ENCODE measurements at regions of chr3 and their contacts with region 1.

Region 1: DNA sequence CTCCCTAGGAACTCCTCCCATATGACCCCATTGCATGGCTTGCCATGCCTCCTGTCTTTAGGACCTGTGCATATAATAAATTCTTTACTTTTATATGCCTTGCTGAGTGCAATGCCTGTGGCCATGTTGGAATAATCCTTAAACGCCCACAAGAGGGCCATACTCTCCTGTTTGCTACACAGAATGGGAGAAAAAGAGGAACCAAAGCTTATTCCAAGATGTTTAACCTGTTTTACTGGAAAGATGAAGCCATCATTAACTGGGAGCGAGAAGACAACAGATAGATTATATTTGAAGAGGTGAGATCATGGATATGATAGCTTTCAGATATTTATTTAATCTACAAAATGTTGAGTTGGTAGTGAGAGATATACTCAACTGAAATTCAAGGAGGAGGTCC is 1097.9 kb downstream of the NAALADL2 start:
- DNase-seq: peak in 1 of 2 experiments; percentile 41
- H3K4me3 ChIP-seq: no peak overlapping the region
- H3K4me3 Mint-ChIP-seq: no peak overlapping the region
- H3K27ac Mint-ChIP-seq: no peak overlapping the region
- H3K4me1 ChIP-seq: no peaks in the 10 kb centered on the region
- H3K4me1 Mint-ChIP-seq: peaks cover 9% of the 10 kb centered on the region
- H3K27me3 ChIP-seq: no peaks in the 10 kb centered on the region
- H3K27me3 Mint-ChIP-seq: no peaks in the 10 kb centered on the region
- CTCF ChIP-seq: peak; percentile 26 to 42

Region 2: DNA sequence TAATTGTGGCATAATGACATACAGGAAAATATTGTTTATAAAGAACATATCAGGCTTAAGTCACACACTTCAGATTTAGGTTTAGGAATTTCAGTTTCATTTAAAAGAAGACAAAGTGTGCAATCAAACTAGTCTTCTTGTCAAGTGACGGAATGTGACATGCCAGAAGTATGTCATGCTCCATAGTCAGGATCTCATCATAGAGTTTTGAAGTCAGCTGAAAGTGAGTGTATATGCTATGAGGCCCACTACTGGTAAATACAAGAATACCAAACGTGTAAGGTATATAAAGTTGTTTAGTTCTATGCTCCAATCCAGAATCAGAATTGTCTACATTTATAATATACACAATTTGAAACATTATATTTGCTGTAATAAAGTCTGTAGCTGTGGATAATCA is 251.9 kb after region 1 on chr3:
- CTCF ChIA-PET with region 1: no interaction called
- POLR2A ChIA-PET with region 1: no interaction called
- intact Hi-C with region 1: loop called (anchors 5 kb)
- DNase-seq: no peak
- H3K4me3 ChIP-seq: no peak overlapping the region
- H3K4me3 Mint-ChIP-seq: no peak overlapping the region
- H3K27ac Mint-ChIP-seq: no peak overlapping the region
- H3K4me1 ChIP-seq: 0 out of 2 replicates have a peak, but pooled peaks cover under 1% of the 10 kb centered on the region
- H3K4me1 Mint-ChIP-seq: no peaks in the 10 kb centered on the region
- H3K27me3 ChIP-seq: no peaks in the 10 kb centered on the region
- H3K27me3 Mint-ChIP-seq: no peaks in the 10 kb centered on the region
- CTCF ChIP-seq: no peak

Region 3: GRCh38 chr3:176359211-176359610 is 402.2 kb after region 1 on chr3:
- CTCF ChIA-PET with region 1: no interaction called
- POLR2A ChIA-PET with region 1: no interaction called
- intact Hi-C with region 1: loop called (anchors 1 kb)
- DNase-seq: no peak
- H3K4me3 ChIP-seq: no peak overlapping the region
- H3K4me3 Mint-ChIP-seq: no peak overlapping the region
- H3K27ac Mint-ChIP-seq: no peak overlapping the region
- H3K4me1 ChIP-seq: no peaks in the 10 kb centered on the region
- H3K4me1 Mint-ChIP-seq: no peaks in the 10 kb centered on the region
- H3K27me3 ChIP-seq: no peaks in the 10 kb centered on the region
- H3K27me3 Mint-ChIP-seq: peaks cover 2% of the 10 kb centered on the region
- CTCF ChIP-seq: peak in 1 of 2 experiments; percentile 39

Region 4: GRCh38 chr3:176430244-176431037 is 473.4 kb after region 1 on chr3:
- CTCF ChIA-PET with region 1: interaction called, 9 read pairs
- POLR2A ChIA-PET with region 1: no interaction called
- intact Hi-C with region 1: loop called (anchors 1 kb)
- DNase-seq: peak in 1 of 2 experiments; percentile 33
- H3K4me3 ChIP-seq: no peak overlapping the region
- H3K4me3 Mint-ChIP-seq: no peak overlapping the region
- H3K27ac Mint-ChIP-seq: no peak overlapping the region
- H3K4me1 ChIP-seq: peaks cover 11% of the 10 kb centered on the region; the same call in 1 of the 2 replicates
- H3K4me1 Mint-ChIP-seq: no peaks in the 10 kb centered on the region
- H3K27me3 ChIP-seq: no peaks in the 10 kb centered on the region
- H3K27me3 Mint-ChIP-seq: no peaks in the 10 kb centered on the region
- CTCF ChIP-seq: peak; percentile 58 to 59

Region 5: GRCh38 chr3:176663837-176664831 is 707.1 kb after region 1 on chr3:
- CTCF ChIA-PET with region 1: no interaction called
- POLR2A ChIA-PET with region 1: no interaction called
- intact Hi-C with region 1: loop called (anchors 1 kb)
- DNase-seq: peak in 1 of 2 experiments; percentile 9
- H3K4me3 ChIP-seq: no peak overlapping the region
- H3K4me3 Mint-ChIP-seq: no peak overlapping the region
- H3K27ac Mint-ChIP-seq: no peak overlapping the region
- H3K4me1 ChIP-seq: no peaks in the 10 kb centered on the region
- H3K4me1 Mint-ChIP-seq: no peaks in the 10 kb centered on the region
- H3K27me3 ChIP-seq: no peaks in the 10 kb centered on the region
- H3K27me3 Mint-ChIP-seq: no peaks in the 10 kb centered on the region
- CTCF ChIP-seq: peak; percentile 24 to 32